A549 (cell line): ENCODE measurements at regions of chr15 and their contacts with region 1.

Region 1: DNA sequence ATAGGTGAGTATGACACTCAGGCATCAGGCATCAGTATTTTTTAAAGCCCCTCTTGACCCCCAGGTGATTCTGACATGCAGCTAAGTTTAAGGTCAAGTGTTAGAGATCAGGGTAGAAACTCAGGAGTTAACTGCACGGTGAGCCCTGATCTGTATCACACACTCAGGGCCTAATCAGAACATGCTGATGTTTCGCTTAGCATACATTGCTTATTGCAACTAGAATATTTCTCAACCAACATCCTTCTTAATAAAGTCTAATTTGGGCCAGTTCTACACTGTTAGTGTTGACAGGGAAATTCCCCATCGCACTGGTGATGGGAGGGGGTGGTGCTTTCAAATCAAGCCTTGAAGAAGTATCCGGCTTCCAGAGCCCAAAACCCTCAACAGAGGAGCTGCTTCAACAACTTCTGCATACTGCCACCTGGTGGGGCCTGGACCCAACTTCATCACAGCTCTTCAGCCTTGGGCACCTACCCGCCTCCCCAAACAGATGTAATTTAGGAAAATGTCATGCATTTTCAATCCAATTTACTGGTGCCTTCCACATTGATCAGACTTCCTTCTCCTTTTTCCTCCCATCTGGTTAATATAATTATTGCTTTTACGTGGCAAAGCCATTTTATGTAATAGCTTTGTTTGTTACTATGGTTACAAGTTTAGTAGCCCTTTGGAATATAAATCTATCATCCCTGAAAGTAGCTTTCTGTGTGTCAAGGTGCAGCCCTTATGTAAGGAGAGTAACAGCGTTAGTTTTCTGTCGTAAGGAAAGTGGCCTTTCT is 312.2 kb downstream of the RORA start:
- DNase-seq: peak; percentile 35 to 80
- ATAC-seq: peak; percentile 89 to 98
- H3K4me3 ChIP-seq: no peak overlapping the region
- H3K27ac ChIP-seq: no peak overlapping the region
- H3K4me1 ChIP-seq: no peaks in the 10 kb centered on the region
- CTCF ChIP-seq: peak; percentile 86
- EP300 ChIP-seq: no peak
- POLR2A ChIP-seq: no peak
- RAD21 ChIP-seq: peak; percentile 73 to 74

Region 2: DNA sequence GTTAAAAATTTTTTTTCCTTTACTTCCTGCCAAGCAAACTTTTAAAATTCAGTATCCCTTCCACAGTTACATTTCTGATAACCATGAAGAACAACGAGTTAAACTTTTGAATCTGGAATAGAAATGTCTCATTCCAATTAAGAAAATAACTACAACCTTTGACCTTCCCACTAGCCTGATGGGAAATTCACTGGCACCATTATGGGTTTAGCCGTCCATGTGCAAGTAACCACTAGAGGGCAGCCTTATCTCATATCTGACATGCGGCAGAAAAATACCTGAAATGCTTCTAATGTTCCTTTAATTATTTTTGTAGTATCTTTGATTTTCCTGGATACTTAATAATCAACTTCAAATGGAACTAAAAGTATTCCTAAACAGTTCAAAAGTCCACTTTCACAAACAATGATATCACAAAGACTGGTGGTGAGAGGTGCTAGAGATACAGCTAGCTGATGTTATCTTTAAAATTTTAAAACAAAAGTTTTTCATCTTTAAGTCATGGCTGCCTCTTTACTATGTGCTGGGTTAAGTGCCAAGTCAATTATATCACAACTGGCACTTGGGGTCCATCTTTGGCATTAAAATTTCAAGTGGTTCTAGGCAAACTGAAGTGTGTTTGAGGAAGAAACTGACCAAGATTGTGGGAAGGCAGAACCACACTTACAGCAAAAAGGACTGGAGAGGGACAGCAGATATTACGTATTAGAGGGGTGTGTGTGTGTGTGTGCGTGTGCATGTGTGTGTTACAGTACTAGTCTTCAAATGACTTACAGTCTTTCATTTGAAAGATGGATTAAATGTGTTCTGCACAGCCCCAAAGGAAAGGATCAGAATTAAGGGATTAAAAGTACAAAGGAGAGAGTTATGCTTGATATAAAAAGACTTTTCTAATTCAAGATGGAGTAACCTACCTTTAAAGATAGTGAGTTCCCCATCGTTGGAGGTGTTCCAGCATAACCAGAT is 330.8 kb before region 1 on chr15:
- CTCF ChIA-PET with region 1: interaction called, 110 read pairs
- POLR2A ChIA-PET with region 1: no interaction called
- DNase-seq: peak; percentile 75 to 79
- ATAC-seq: peak; percentile 54 to 85; a peak in 4 of 6 replicates
- H3K4me3 ChIP-seq: no peak overlapping the region
- H3K27ac ChIP-seq: no peak overlapping the region
- H3K4me1 ChIP-seq: peaks cover 4% of the 10 kb centered on the region; the same call in 1 of the 3 replicates
- CTCF ChIP-seq: peak; percentile 99
- EP300 ChIP-seq: no peak
- POLR2A ChIP-seq: no peak
- RAD21 ChIP-seq: peak; percentile 96 to 97

Region 3: DNA sequence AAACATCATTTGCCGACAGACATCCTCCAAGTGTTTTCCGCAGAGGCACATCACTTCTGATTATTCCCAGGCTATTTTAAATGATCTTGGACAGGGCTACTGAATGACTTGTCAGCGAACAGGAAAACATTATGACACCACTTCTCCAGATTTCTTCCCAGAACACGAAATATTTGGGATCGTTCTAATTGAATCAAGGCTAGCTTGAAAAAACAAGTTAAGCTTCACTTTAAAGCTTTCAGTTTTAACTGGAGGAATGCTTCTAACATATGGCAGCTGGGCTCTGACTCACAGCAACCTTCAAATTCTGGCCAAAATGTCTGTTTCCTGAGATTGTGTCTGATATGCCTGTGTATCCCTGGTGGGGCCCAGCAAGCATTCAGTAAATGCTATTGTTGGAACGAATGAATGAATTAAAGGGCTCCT is 311.0 kb before region 1 on chr15:
- CTCF ChIA-PET with region 1: interaction called, 10 read pairs
- POLR2A ChIA-PET with region 1: no interaction called
- DNase-seq: no peak
- ATAC-seq: no peak
- H3K4me3 ChIP-seq: no peak overlapping the region
- H3K27ac ChIP-seq: no peak overlapping the region
- H3K4me1 ChIP-seq: no peaks in the 10 kb centered on the region
- CTCF ChIP-seq: no peak; the same call in 2 of the 3 replicates
- EP300 ChIP-seq: no peak
- POLR2A ChIP-seq: no peak
- RAD21 ChIP-seq: no peak

Region 4: GRCh38 chr15:60905587-60905986 is 11.3 kb before region 1 on chr15:
- CTCF ChIA-PET with region 1: interaction called, 80 read pairs
- POLR2A ChIA-PET with region 1: no interaction called
- DNase-seq: no peak
- ATAC-seq: no peak
- H3K4me3 ChIP-seq: no peak overlapping the region
- H3K27ac ChIP-seq: no peak overlapping the region
- H3K4me1 ChIP-seq: no peaks in the 10 kb centered on the region
- CTCF ChIP-seq: no peak
- EP300 ChIP-seq: no peak
- POLR2A ChIP-seq: no peak
- RAD21 ChIP-seq: no peak; a peak in 1 of 5 replicates

Region 5: DNA sequence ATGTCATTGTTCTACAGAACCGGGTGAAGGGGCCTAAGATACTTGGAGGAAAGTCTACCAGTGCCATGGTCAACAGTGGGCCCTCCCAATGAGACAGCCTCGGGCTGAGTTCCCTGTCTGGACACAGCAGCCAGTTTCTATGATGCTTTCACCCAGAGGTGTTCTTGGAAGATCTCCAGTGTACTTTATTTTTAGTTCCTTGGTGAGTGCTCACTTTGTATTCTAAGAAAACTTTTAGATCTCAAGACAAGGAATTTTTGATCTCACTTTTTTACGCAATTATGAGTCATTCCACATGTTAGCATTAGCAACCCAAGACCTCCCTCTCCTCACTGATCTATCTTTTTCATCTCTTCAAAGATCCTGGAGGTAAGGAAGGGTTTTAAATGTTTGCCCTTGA is 24.6 kb after region 1 on chr15:
- CTCF ChIA-PET with region 1: interaction called, 11 read pairs
- POLR2A ChIA-PET with region 1: no interaction called
- DNase-seq: no peak
- ATAC-seq: no peak
- H3K4me3 ChIP-seq: no peak overlapping the region
- H3K27ac ChIP-seq: no peak overlapping the region
- H3K4me1 ChIP-seq: no peaks in the 10 kb centered on the region
- CTCF ChIP-seq: no peak
- EP300 ChIP-seq: no peak
- POLR2A ChIP-seq: no peak
- RAD21 ChIP-seq: no peak